ENCODE measurements at regions of chr2 and their contacts with region 1.

Region 1: GRCh38 chr2:197198890-197199289 is 111.7 kb downstream of the ANKRD44 start:
- DNase-seq: peak; percentile 95
- H3K4me3 Mint-ChIP-seq: peak overlapping the region; percentile 80
- H3K27ac Mint-ChIP-seq: peak overlapping the region; percentile 93
- H3K4me1 Mint-ChIP-seq: peaks cover 90% of the 10 kb centered on the region
- H3K27me3 Mint-ChIP-seq: no peaks in the 10 kb centered on the region

Region 2: GRCh38 chr2:197209742-197210408 is 11.0 kb after region 1 on chr2:
- CTCF ChIA-PET with region 1: interaction called, 29 read pairs
- POLR2A ChIA-PET with region 1: interaction called, 33 read pairs
- intact Hi-C with region 1: loop called (anchors 1 kb)
- DNase-seq: peak; percentile 86
- H3K4me3 Mint-ChIP-seq: peak overlapping the region; percentile 58
- H3K27ac Mint-ChIP-seq: peak overlapping the region; percentile 94
- H3K4me1 Mint-ChIP-seq: peaks cover 98% of the 10 kb centered on the region
- H3K27me3 Mint-ChIP-seq: no peaks in the 10 kb centered on the region

Region 3: DNA sequence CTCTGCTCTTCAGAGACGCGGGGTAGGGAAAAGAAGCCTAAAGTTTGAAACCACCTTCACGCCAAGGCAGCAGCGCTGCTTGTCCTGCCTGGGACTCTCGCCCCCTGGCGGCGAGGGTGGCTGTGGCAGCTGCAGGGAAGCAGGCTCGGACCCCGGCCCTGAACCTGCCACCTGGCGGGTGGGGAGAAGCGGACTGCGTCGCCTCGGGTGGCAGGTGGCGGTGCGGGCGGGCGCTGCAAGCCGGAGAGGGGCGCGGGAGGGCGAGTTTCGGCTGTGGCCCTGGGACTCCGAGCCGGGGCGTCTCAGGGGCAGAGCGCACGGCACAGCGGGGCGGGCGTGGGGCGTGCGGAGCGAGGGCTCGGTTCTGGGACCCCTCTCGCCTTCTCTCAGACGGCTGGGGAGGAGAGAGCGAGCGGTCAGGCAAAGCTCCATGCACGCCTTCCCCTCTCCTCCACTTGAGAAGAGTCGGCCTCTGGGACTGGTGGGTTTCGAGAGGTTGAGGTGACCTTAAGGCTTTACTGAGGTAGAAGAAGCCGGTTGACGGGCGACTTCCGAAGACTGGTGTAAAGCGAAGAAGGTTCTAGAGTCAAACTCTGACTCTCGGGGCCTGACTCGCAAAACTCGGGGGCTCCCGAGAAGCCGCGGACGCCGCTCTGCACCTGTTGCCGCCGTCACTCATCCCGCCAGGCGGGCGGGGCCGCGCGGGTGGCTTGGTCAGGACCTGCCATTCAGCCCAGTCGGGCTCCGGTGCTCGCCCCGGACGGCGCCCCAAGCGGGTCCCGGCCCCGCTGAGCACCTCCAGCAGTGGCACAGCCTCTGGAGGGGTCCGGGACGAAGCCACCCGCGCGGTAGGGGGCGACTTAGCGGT is 587.4 kb after region 1 on chr2:
- CTCF ChIA-PET with region 1: no interaction called
- POLR2A ChIA-PET with region 1: no interaction called
- intact Hi-C with region 1: no loop called
- DNase-seq: peak; percentile 77
- H3K4me3 Mint-ChIP-seq: peak overlapping the region; percentile 64
- H3K27ac Mint-ChIP-seq: peak overlapping the region; percentile 2
- H3K4me1 Mint-ChIP-seq: peaks cover 2% of the 10 kb centered on the region
- H3K27me3 Mint-ChIP-seq: peaks cover 3% of the 10 kb centered on the region

Measured in activated CD4-positive, alpha-beta memory T cell treated with anti-CD3 and anti-CD28 coated beads for 36 hours (primary cell).